MCF 10A (cell line): ENCODE measurements at regions of chr1 and their contacts with region 1.

Region 1: DNA sequence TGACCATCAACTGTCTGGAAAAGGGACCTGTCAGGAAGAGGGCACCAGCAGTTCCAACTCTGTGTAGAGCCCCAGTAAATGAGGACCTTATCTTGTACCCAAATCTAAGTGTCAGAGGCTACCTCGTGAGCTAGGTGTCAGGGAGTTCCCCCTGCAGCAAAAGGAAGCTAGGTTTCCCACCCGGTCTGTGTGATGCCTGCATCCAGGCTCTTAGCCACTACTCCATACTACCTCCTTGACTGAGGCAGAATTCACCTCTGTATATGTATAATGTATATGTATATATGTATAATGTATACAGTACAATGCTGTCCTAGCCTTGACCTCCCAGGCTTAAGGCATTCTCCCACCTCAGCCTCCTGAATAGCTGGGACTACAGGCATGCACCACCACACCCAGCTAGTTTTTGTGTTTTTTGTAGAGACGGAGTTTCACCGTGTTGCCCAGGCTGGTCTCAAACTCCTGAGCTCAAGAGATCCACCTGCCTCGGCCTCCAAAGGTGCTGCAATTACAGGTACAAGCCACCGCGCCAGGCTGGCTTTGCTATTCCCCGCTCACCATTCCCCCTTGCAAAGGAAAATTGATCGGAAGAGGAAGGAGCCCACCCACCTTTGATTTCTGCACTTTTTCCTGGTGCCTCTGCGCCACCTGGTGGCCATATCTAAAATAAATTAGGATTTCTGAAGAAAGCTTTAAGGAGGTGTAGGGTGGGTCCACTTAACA is 15.7 kb upstream of the LUZP1 start:
- DNase-seq: peak; percentile 56
- H3K4me3 Mint-ChIP-seq: no peak overlapping the region
- H3K27ac Mint-ChIP-seq: no peak overlapping the region
- H3K4me1 Mint-ChIP-seq: peaks cover 12% of the 10 kb centered on the region
- H3K27me3 Mint-ChIP-seq: no peaks in the 10 kb centered on the region
- CTCF ChIP-seq: peak; percentile 92

Region 2: DNA sequence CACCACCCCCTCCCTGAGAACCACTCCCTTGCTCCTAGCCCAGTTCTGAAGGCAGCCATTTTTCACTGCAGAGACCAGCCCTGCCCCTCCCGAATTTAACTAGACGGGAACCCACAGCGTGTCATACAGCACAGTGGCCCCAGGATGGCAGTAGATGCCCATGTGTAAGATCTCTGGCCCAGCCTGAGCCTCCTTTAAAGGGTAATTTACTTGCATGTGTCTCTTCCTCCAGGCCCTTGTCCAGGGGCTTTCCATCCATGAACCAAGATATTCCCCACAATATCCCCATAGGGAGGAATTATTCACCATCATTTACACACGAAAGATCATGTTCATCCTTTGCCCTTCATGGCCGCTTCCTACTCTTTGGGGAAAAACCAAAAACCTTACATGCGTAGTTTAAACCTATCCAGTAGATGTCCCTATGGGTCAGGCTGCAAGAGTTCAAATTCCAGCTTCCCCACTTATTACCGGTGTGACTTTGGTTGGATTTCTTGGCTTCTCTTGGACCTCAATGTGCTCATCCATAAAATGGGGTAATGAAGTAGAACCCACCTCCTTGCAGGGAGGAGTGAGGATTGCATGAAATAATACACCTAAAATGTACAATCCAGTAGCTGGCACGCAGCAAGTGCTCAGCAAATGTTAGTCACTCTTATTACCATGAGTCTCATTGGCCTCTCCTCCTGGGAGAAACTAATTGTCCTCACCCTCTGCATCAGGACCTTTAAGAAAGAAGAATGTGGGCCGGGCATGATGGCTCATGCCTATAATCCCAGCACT is 207.7 kb before region 1 on chr1:
- CTCF ChIA-PET with region 1: interaction called, 15 read pairs
- POLR2A ChIA-PET with region 1: interaction called, 8 read pairs
- intact Hi-C with region 1: loop called (anchors 1 kb)
- DNase-seq: peak; percentile 88
- H3K4me3 Mint-ChIP-seq: no peak overlapping the region
- H3K27ac Mint-ChIP-seq: no peak overlapping the region
- H3K4me1 Mint-ChIP-seq: peaks cover 30% of the 10 kb centered on the region
- H3K27me3 Mint-ChIP-seq: no peaks in the 10 kb centered on the region
- CTCF ChIP-seq: peak; percentile 92

Region 3: DNA sequence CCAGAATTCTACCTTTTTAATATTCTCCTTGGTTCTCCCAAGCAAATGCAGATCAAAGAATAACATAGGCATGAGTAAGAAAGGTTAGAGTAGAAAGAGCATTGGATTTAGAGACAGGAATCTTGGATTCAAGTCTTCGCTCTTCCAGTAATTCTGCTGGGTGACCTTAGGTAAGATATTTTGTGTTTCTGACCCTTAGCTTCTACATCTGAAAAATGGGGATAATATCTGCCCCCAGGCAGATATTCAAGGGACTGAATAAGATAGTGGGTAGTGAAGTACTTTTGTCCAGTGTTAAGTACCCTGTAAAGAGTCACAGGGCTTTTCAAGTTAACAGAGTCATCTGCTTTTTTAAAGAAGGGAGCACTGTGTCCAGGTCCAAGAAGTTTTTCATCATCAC is 94.3 kb before region 1 on chr1:
- CTCF ChIA-PET with region 1: interaction called, 405 read pairs
- POLR2A ChIA-PET with region 1: interaction called, 3 read pairs
- intact Hi-C with region 1: no loop called
- DNase-seq: no peak
- H3K4me3 Mint-ChIP-seq: no peak overlapping the region
- H3K27ac Mint-ChIP-seq: no peak overlapping the region
- H3K4me1 Mint-ChIP-seq: no peaks in the 10 kb centered on the region
- H3K27me3 Mint-ChIP-seq: no peaks in the 10 kb centered on the region
- CTCF ChIP-seq: no peak

Region 4: DNA sequence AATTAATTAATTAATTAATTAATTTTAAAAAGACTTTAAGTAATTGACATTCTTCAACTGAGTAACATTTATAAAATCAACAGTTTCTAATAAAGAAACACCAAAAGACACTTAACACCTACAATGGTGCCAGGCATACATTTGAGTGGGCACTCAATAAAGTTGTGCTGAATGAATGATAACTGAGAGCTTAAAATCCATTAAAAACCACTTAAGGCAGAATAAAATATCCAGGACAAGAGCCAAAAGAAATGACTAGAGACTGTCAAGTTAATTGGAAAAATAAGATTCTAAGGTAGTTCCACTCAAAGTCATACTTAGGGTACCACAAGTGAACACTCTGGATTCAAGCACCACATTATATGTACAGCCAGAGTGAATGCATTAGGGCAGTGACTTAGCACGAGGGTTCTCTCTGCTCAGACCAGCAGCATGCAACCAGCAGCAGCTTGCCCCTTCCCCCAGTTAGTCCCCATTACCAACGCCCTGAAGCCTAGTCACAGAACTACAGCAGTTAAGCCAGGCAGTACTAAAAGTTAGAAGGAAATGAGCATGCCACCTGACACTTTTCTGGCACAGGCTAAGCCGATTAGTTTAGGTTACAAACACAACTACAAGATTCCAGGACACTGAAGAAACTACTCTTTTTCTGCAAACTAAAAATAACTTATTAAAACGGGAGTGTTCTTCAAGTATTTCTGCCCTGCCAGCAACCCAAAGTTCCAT is 62.2 kb before region 1 on chr1:
- CTCF ChIA-PET with region 1: interaction called, 15 read pairs
- POLR2A ChIA-PET with region 1: no interaction called
- intact Hi-C with region 1: no loop called
- DNase-seq: peak; percentile 57
- H3K4me3 Mint-ChIP-seq: no peak overlapping the region
- H3K27ac Mint-ChIP-seq: no peak overlapping the region
- H3K4me1 Mint-ChIP-seq: peaks cover 32% of the 10 kb centered on the region
- H3K27me3 Mint-ChIP-seq: no peaks in the 10 kb centered on the region
- CTCF ChIP-seq: no peak

Region 5: DNA sequence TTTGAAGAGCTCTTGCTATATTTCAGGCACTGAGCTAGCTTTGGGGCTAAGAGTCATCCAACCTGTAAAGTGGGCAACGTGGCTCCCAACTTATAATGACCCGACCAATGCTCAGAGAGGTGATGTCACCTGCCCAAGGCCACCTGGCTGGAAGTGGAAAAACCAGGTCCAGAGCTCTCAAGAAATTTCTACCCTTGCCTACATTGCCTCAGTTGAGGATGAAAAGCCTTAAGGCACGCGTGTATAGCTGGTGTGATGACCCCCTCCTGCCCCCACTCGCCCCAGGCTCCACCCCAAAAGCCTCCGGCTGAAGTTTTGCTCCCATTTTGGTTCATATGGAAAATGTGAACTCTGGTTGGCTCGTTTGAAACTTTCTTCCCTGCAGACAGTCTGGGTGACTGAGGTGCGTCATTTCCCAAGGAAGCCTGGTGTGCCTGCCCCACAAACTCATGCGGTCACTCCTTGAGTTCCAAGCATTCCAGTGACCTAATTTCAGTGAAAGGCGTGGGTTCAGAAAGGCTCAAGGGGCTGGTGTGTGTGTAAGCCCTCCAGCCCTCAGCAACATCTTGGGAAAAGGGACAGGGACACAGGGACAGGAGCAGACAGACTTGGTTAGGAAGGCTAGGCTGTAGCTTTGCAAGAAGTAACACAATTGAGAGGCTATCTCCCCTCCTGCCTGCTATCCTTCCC is 12.4 kb after region 1 on chr1:
- CTCF ChIA-PET with region 1: interaction called, 71 read pairs
- POLR2A ChIA-PET with region 1: interaction called, 10 read pairs
- intact Hi-C with region 1: no loop called
- DNase-seq: peak; percentile 92
- H3K4me3 Mint-ChIP-seq: peak overlapping the region; percentile 24
- H3K27ac Mint-ChIP-seq: peak overlapping the region; percentile 89
- H3K4me1 Mint-ChIP-seq: peaks cover 39% of the 10 kb centered on the region
- H3K27me3 Mint-ChIP-seq: no peaks in the 10 kb centered on the region
- CTCF ChIP-seq: no peak

Region 6: GRCh38 chr1:23484253-23485001 is 300.1 kb after region 1 on chr1:
- CTCF ChIA-PET with region 1: no interaction called
- POLR2A ChIA-PET with region 1: no interaction called
- intact Hi-C with region 1: no loop called
- DNase-seq: peak; percentile 90
- H3K4me3 Mint-ChIP-seq: peak overlapping the region; percentile 76
- H3K27ac Mint-ChIP-seq: no peak overlapping the region
- H3K4me1 Mint-ChIP-seq: peaks cover 15% of the 10 kb centered on the region
- H3K27me3 Mint-ChIP-seq: no peaks in the 10 kb centered on the region
- CTCF ChIP-seq: no peak